Left ventricle myocardium inferior (tissue), 1 donor: ENCODE measurements at regions of chr4 and their contacts with region 1.

Region 1: DNA sequence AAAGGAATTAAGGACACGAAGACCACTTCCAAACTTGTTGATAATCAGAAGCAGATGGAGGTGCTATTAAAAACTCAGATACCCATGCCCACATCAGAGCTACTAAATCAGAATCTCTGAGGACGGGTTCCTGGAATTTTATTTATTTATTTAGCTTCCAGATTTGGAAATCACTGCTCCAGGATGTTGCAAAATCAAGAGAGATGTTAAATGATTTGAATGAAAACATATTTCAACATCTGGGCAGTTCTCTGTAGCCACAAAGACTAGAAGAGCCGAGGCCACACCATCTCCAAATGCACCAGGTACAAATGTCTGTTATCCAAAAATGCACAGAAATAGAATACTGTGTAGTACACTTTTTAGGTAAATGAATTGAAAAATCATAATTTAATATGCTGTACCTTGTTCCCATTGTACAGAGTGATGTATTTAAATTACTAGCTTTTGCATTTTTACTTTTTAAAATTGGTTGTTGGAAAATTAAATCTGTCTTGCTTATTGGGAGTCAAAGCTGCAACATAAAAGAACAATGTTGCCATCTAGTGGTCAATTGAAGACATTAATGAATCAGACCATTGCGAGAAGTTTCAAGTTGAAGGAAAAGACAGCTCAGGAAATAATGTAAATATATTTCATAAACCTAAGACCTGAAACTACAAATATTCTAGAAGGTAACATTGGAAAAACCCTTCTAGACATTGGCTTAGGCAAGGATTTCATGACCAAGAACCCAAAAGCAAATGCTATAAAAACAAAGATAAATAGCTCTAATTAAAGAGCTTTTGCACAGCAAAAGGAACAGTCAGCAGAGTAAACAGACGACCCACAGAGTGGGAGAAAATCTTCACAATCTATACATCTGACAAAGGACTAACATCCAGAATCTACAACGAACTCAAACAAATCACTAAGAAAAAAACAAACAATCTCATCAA is 151.3 kb upstream of the TTC29 start:
- DNase-seq: no peak
- H3K4me3 ChIP-seq: no peak overlapping the region
- H3K27ac ChIP-seq: no peak overlapping the region
- H3K4me1 ChIP-seq: no peaks in the 10 kb centered on the region
- H3K27me3 ChIP-seq: no peaks in the 10 kb centered on the region
- CTCF ChIP-seq: peak; percentile 78

Region 2: GRCh38 chr4:147019061-147019460 is 77.9 kb before region 1 on chr4:
- intact Hi-C with region 1: loop called (anchors 5 kb)
- DNase-seq: peak; percentile 48
- H3K4me3 ChIP-seq: no peak overlapping the region
- H3K27ac ChIP-seq: no peak overlapping the region
- H3K4me1 ChIP-seq: no peaks in the 10 kb centered on the region
- H3K27me3 ChIP-seq: peaks cover 6% of the 10 kb centered on the region
- CTCF ChIP-seq: peak; percentile 77